Activated CD4-positive, alpha-beta memory T cell treated with anti-CD3 and anti-CD28 coated beads for 36 hours (primary cell): ENCODE measurements at regions of chr1 and their contacts with region 1.

Region 1: GRCh38 chr1:146007506-146008133 is 11.2 kb upstream of the TXNIP start:
- DNase-seq: no peak
- H3K4me3 Mint-ChIP-seq: no peak overlapping the region
- H3K27ac Mint-ChIP-seq: peak overlapping the region; percentile 76
- H3K4me1 Mint-ChIP-seq: peaks cover 40% of the 10 kb centered on the region
- H3K27me3 Mint-ChIP-seq: no peaks in the 10 kb centered on the region

Region 2: DNA sequence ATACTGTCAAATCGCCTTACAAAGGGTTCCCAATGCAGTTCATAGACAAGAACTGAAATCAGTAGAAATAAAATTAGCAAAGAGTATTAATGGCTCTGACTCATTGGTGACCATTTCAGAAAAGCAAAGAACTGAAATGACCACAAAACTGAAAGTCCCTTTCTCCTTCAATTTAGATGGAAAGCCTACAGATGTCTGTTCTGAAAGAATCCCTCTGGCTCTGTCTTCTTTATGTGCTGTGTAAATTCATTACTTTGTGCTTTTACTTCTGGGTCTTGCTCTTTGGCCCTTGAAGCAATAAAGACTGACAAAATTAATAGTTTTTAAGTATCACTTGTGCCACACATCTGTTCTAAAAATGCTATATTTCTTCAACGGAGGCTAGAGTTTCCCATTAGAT is 462.6 kb before region 1 on chr1:
- CTCF ChIA-PET with region 1: no interaction called
- POLR2A ChIA-PET with region 1: no interaction called
- intact Hi-C with region 1: no loop called
- DNase-seq: no peak
- H3K4me3 Mint-ChIP-seq: no peak overlapping the region
- H3K27ac Mint-ChIP-seq: no peak overlapping the region
- H3K4me1 Mint-ChIP-seq: no peaks in the 10 kb centered on the region
- H3K27me3 Mint-ChIP-seq: peaks cover 16% of the 10 kb centered on the region

Region 3: GRCh38 chr1:145891587-145892485 is 115.8 kb before region 1 on chr1:
- CTCF ChIA-PET with region 1: interaction called, 17 read pairs
- POLR2A ChIA-PET with region 1: no interaction called
- intact Hi-C with region 1: no loop called
- DNase-seq: peak; percentile 74
- H3K4me3 Mint-ChIP-seq: no peak overlapping the region
- H3K27ac Mint-ChIP-seq: no peak overlapping the region
- H3K4me1 Mint-ChIP-seq: peaks cover 1% of the 10 kb centered on the region
- H3K27me3 Mint-ChIP-seq: no peaks in the 10 kb centered on the region

Region 4: DNA sequence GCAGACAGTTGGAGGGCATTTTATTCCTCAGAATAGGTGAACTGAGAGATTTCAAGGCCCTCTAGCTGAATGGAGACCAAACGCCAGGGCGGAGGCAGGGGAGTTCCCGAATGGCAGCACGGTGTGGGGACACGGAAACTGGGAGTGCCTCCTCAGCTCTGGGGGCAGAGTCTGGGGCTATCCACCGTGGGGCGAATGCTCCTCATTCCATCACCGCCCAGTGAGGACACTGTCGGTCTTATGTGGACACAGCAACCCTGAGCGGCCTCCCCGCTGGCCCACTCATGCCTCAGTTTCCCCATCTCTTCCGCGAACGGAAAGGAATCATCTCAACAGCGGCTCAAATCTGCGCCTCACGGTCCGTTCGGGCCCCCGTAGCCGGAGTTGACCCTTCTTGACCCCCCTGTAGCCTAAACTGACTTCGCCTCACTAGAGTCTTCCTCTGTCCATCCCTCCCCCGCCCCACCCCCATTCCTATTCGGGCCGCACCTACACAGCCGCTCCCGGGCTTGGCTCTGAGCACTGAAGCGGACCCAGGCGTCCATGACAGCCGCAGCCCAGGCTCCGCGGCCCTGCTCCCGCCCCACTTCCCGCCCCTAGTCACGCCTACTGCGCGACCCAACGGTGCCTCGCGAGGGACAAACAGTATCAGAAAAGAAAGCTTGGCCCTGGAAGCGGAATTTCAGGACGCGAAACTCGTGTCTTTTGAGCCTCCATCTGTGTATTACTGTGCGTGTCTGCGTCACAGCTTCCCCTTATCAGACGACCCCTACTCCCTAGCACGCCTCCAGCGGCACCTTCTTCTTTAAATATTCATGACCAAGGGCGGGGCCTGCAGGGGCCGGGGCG is 89.3 kb before region 1 on chr1 and contains the start of gene PEX11B:
- CTCF ChIA-PET with region 1: interaction called, 4 read pairs
- POLR2A ChIA-PET with region 1: no interaction called
- intact Hi-C with region 1: loop called (anchors 2 kb)
- DNase-seq: peak; percentile 94
- H3K4me3 Mint-ChIP-seq: peak within 1 kb of the TSS; percentile 90
- H3K27ac Mint-ChIP-seq: peak within 1 kb of the TSS; percentile 96
- H3K4me1 Mint-ChIP-seq: peaks cover 45% of the 10 kb centered on the region
- H3K27me3 Mint-ChIP-seq: no peaks in the 10 kb centered on the region
- total RNA-seq, gene PEX11B: 22.8 to 25.6 TPM

Region 5: DNA sequence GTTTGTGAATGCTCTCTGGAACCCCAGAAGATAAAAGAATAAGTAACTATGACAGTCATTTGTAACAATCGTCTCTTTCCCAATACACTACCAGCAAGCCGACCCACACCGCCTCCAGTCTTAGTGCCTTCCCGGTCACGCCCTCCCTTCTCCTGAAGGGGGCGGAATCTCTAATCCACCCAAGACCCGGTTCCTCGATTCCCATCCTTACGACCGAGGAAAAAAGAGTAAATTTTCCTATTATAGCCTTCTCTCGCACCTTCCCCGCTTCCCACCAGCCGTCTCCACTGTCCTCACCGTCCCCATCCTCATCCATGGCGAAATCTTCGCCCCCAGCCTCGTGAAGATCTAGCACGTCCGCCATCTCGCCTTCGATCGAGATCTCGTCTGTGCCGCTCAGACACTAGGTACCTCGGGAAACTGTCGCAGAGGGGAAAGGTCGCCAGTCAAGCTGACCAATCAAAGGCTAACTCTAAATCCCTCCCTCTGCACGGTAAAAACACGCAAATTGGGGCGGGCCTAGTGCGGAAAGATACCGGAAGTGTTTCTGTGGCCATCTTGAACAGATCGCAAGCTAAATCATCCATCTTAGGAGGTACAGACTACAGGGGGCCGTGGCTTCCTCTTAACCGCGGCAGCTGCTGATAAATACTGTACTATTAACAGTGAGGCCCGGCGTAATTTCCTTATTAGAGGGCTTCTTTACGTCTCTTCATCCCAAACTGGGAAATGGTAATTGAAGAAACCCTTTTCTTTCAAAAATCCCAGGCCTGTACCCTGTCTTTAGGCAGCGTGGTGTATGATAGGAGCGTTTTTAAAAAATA is 80.3 kb before region 1 on chr1 and contains the start of gene RBM8A:
- CTCF ChIA-PET with region 1: interaction called, 4 read pairs
- POLR2A ChIA-PET with region 1: interaction called, 3 read pairs
- intact Hi-C with region 1: loop called (anchors 2 kb)
- DNase-seq: peak; percentile 97
- H3K4me3 Mint-ChIP-seq: no peak within 1 kb of the TSS
- H3K27ac Mint-ChIP-seq: no peak within 1 kb of the TSS
- H3K4me1 Mint-ChIP-seq: peaks cover 25% of the 10 kb centered on the region
- H3K27me3 Mint-ChIP-seq: no peaks in the 10 kb centered on the region
- total RNA-seq, gene RBM8A: 275 to 277 TPM

Region 6: DNA sequence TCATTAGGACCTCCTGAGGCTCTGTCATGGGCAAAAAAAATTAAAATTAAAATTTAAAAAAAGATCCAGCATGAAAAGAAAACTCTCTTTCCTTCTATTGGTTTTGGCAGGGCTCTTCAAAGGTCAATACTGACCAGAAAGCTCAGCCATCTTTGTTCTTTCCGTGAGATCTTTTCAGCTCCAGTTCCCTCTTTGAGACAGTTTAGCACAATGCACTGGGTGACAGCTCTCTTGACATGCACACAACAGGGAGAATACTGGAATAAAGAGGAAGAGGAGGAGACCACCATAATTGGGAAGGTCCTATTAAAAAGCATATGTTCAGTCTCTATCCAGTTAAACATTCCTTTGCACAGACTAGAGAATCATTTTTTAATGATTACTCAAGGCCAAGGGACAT is 56.1 kb before region 1 on chr1:
- CTCF ChIA-PET with region 1: no interaction called
- POLR2A ChIA-PET with region 1: no interaction called
- intact Hi-C with region 1: no loop called
- DNase-seq: no peak
- H3K4me3 Mint-ChIP-seq: no peak overlapping the region
- H3K27ac Mint-ChIP-seq: no peak overlapping the region
- H3K4me1 Mint-ChIP-seq: peaks cover 52% of the 10 kb centered on the region
- H3K27me3 Mint-ChIP-seq: no peaks in the 10 kb centered on the region

Region 7: GRCh38 chr1:145963995-145964901 is 43.4 kb before region 1 on chr1 and contains the starts of genes ANKRD34A and POLR3GL:
- CTCF ChIA-PET with region 1: interaction called, 11 read pairs
- POLR2A ChIA-PET with region 1: interaction called, 8 read pairs
- intact Hi-C with region 1: no loop called
- DNase-seq: peak; percentile 96
- H3K4me3 Mint-ChIP-seq: peak within 1 kb of the TSS; percentile 98
- H3K27ac Mint-ChIP-seq: peak within 1 kb of the TSS; percentile 95
- H3K4me1 Mint-ChIP-seq: peaks cover 31% of the 10 kb centered on the region
- H3K27me3 Mint-ChIP-seq: no peaks in the 10 kb centered on the region
- total RNA-seq, gene ANKRD34A: 4.6 to 4.7 TPM
- total RNA-seq, gene POLR3GL: 27.3 to 30.9 TPM

Region 8: DNA sequence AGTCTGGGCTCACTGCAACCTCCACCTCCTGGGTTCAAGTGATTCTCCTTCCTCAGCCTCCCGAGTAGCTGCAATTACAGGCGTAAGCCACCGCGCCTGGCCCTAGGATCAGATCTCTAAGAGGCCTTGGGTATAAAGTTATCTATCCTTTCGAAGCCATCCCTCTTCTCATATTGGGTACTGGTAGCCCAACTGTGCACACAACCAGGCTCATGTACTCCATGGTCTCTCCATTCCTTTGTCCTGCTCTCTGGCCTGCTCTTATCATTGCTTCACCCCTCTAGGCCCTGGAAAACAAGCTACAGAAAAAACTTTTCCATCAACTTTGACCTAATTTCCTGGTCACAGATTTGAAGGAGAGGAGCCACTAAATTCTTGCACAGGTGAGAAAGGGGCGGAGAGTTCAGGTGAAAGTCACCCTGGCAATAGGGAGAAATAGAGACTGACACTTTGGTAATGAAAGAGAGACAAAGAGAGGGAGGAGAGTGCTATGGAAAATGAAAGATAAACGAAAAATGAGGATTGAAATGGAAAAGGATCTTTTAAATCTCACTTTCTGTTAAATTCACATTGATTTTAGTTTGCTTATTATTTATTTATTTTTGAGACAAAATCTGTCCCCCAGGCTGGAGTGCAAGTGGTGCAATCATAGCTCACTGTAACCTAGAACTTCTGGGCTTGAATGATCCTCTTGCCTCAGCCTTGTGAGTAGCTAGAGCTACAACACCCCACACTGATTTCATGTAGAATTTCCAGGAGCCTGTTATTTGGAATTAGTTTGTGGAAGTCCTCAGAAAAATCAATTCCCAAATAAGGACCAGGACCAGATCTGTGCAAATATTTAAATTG is 17.1 kb before region 1 on chr1:
- CTCF ChIA-PET with region 1: interaction called, 13 read pairs
- POLR2A ChIA-PET with region 1: interaction called, 3 read pairs
- intact Hi-C with region 1: no loop called
- DNase-seq: no peak
- H3K4me3 Mint-ChIP-seq: no peak overlapping the region
- H3K27ac Mint-ChIP-seq: peak overlapping the region; percentile 6
- H3K4me1 Mint-ChIP-seq: peaks cover 61% of the 10 kb centered on the region
- H3K27me3 Mint-ChIP-seq: no peaks in the 10 kb centered on the region

Region 9: GRCh38 chr1:146036965-146037646 is 29.5 kb after region 1 on chr1:
- CTCF ChIA-PET with region 1: interaction called, 12 read pairs
- POLR2A ChIA-PET with region 1: no interaction called
- intact Hi-C with region 1: no loop called
- DNase-seq: peak; percentile 87
- H3K4me3 Mint-ChIP-seq: peak overlapping the region; percentile 100
- H3K27ac Mint-ChIP-seq: peak overlapping the region; percentile 99
- H3K4me1 Mint-ChIP-seq: peaks cover 32% of the 10 kb centered on the region
- H3K27me3 Mint-ChIP-seq: peaks cover 9% of the 10 kb centered on the region